ENCODE measurements at regions of chr16 and their contacts with region 1.

Region 1: GRCh38 chr16:96935-97381 is 18.9 kb downstream of the MPG start:
- DNase-seq: peak; percentile 90
- H3K4me3 Mint-ChIP-seq: no peak overlapping the region
- H3K27ac Mint-ChIP-seq: no peak overlapping the region
- H3K4me1 Mint-ChIP-seq: peaks cover 10% of the 10 kb centered on the region
- H3K27me3 Mint-ChIP-seq: no peaks in the 10 kb centered on the region
- CTCF ChIP-seq: peak; percentile 95

Region 2: GRCh38 chr16:53346-54236 is 43.4 kb before region 1 on chr16 and contains the starts of genes POLR3K and SNRNP25:
- CTCF ChIA-PET with region 1: interaction called, 5 read pairs
- POLR2A ChIA-PET with region 1: no interaction called
- intact Hi-C with region 1: loop called (anchors 1 kb)
- DNase-seq: peak; percentile 97
- H3K4me3 Mint-ChIP-seq: peak within 1 kb of the TSS; percentile 98
- H3K27ac Mint-ChIP-seq: peak within 1 kb of the TSS; percentile 92
- H3K4me1 Mint-ChIP-seq: peaks cover 5% of the 10 kb centered on the region
- H3K27me3 Mint-ChIP-seq: no peaks in the 10 kb centered on the region
- CTCF ChIP-seq: no peak
- total RNA-seq, gene POLR3K: 14.8 and 19.2 TPM in 2 replicates
- total RNA-seq, gene SNRNP25: 11.9 and 21.2 TPM in 2 replicates

Region 3: GRCh38 chr16:65671-66137 is 31.3 kb before region 1 on chr16:
- CTCF ChIA-PET with region 1: interaction called, 89 read pairs
- POLR2A ChIA-PET with region 1: interaction called, 6 read pairs
- intact Hi-C with region 1: loop called (anchors 1 kb)
- DNase-seq: peak; percentile 76
- H3K4me3 Mint-ChIP-seq: no peak overlapping the region
- H3K27ac Mint-ChIP-seq: no peak overlapping the region
- H3K4me1 Mint-ChIP-seq: no peaks in the 10 kb centered on the region
- H3K27me3 Mint-ChIP-seq: no peaks in the 10 kb centered on the region
- CTCF ChIP-seq: peak; percentile 98

Region 4: GRCh38 chr16:72561-73548 is 24.1 kb before region 1 on chr16 and contains the start of gene RHBDF1:
- CTCF ChIA-PET with region 1: interaction called, 56 read pairs
- POLR2A ChIA-PET with region 1: interaction called, 11 read pairs
- intact Hi-C with region 1: no loop called
- DNase-seq: peak; percentile 42
- H3K4me3 Mint-ChIP-seq: peak within 1 kb of the TSS; percentile 71
- H3K27ac Mint-ChIP-seq: peak within 1 kb of the TSS; percentile 62
- H3K4me1 Mint-ChIP-seq: peaks cover 24% of the 10 kb centered on the region
- H3K27me3 Mint-ChIP-seq: no peaks in the 10 kb centered on the region
- CTCF ChIP-seq: no peak
- total RNA-seq, gene RHBDF1: 26.3 and 30.0 TPM in 2 replicates

Region 5: DNA sequence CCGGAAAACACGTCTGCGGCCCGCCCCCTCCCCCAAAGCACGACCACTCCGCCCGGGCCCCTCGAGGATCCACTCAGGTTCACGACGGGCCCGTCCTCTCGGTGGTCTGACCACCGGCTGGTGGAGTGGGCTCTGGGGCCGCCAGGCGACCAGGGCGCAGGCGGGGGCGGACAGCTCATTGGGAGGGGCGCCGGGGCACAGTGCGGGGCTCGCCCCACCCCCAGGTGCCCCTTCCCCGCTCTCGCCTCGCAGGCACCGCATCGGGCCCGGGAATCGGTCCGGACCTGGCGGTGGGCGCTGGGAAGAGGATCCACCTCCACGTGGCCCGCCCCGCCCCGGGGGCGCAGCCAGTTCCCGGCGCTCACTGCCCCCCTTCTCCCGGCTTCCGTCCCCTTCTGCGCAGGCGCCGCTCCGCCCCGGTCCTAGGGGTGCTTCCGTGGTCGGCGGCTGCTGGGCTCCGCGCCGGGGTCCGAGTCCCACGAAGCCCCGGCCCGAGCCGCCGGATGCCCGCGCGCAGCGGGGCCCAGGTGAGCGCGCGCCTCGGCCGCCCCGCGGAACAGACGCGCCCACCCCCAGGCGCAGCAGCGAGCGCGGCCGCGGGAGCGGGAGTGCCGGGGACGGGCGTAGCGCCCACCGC is 19.0 kb before region 1 on chr16 and contains the start of gene MPG:
- CTCF ChIA-PET with region 1: interaction called, 56 read pairs
- POLR2A ChIA-PET with region 1: interaction called, 11 read pairs
- intact Hi-C with region 1: no loop called
- DNase-seq: peak; percentile 80
- H3K4me3 Mint-ChIP-seq: peak within 1 kb of the TSS; percentile 82
- H3K27ac Mint-ChIP-seq: peak within 1 kb of the TSS; percentile 85
- H3K4me1 Mint-ChIP-seq: peaks cover 22% of the 10 kb centered on the region
- H3K27me3 Mint-ChIP-seq: no peaks in the 10 kb centered on the region
- CTCF ChIP-seq: no peak
- total RNA-seq, gene MPG: 62.8 and 66.1 TPM in 2 replicates

Region 6: DNA sequence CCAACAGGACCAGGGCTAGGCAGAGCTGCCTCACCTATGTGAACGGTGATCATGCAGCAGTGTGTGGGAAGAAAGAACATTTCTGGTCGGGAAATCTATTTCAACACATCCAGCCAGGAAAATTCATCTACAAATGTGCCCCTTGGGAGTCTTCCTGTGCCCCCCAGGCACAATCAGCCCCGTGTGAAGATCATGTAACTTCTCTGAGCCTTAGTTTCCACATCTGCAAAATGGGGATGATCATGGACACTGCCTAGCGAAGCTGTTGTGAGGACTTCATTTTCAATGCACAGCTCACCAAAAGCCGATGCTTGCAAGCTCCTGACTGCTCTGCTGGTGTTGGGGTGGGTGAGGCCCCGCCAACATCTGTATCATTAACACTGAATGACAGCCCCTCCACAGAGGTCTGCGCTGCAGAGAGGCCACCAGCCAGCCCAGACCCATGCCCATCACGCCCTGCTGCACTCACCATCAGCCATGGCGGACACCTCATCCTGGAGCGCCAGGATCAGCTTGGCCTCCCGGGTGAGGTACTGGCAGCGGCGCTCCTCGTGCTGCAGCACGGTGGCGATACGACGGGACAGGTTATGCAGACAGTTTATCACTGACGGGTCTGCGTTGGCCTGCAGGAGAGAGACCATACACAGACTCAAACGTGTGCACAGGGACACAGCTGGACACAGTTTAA is 15.3 kb after region 1 on chr16:
- CTCF ChIA-PET with region 1: interaction called, 65 read pairs
- POLR2A ChIA-PET with region 1: interaction called, 6 read pairs
- intact Hi-C with region 1: no loop called
- DNase-seq: no peak
- H3K4me3 Mint-ChIP-seq: no peak overlapping the region
- H3K27ac Mint-ChIP-seq: no peak overlapping the region
- H3K4me1 Mint-ChIP-seq: peaks cover 13% of the 10 kb centered on the region
- H3K27me3 Mint-ChIP-seq: no peaks in the 10 kb centered on the region
- CTCF ChIP-seq: no peak

Region 7: DNA sequence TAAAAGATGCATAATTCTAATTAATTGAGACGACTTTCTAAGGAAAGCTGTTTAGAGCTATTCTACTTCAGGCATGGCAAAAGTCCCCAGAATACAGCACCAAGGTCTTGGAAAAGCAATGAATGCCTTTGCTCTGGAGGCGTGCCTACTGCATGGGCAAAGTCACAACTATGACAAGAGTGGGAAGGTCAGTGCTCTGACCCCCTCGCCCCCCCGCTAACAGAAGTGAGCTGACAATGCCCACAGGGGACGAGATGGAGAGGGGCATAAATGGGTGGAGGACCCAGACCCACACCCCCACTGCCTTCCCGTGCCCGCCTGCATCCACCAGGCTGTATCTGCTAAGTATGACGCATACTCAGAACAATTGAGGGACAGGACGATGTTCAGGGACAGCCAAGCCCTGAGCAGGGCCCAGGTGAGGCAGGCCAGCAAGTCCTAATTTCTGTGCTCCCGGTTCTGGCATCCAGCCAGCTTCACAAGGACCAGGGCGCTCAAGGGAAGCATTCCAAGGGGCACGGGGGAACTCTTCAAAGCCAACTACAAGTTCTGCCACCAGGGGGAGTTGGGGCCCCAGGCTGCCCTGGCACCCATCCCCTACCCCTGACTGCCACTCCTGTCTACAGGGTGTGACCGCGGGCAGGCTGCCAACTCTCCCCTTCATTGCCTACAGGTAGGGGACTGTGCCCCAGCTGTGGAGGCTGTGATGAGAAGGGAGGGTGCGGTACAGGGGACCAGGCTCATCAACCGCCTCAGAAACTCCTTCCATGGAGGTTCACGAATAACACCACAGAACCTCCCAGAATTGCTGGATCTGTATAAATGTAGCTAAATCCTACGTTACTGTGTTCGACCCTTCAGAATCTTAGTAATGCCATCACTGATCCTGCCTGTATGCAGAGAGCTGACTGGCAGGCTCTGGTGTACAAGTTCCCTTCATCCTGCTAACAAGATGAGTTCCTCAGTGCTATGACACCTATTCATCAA is 20.7 kb after region 1 on chr16:
- CTCF ChIA-PET with region 1: interaction called, 11 read pairs
- POLR2A ChIA-PET with region 1: interaction called, 3 read pairs
- intact Hi-C with region 1: no loop called
- DNase-seq: peak; percentile 69
- H3K4me3 Mint-ChIP-seq: no peak overlapping the region
- H3K27ac Mint-ChIP-seq: no peak overlapping the region
- H3K4me1 Mint-ChIP-seq: peaks cover 13% of the 10 kb centered on the region
- H3K27me3 Mint-ChIP-seq: no peaks in the 10 kb centered on the region
- CTCF ChIP-seq: peak; percentile 69

Region 8: DNA sequence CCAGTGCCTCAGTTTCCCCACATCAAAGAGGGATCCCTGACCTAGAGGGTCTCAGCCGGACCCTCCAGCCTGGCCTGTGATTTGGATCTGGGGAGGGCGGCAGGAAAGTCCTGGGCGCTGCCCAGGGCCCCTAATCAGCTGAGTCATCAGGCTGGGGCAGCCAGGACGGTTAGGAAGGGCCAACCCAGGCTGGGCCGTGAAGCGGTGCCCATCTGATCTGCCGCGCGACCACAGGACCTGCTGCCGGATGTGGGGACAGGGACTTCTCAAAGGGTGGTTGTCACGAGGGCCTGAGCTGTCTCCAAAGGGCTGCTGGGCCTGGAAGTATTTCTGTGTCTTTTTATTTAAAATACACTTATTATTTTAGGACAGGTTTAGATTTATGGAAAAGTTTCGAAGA is 1147.9 kb after region 1 on chr16:
- CTCF ChIA-PET with region 1: no interaction called
- POLR2A ChIA-PET with region 1: no interaction called
- intact Hi-C with region 1: no loop called
- DNase-seq: no peak
- H3K4me3 Mint-ChIP-seq: no peak overlapping the region
- H3K27ac Mint-ChIP-seq: no peak overlapping the region
- H3K4me1 Mint-ChIP-seq: no peaks in the 10 kb centered on the region
- H3K27me3 Mint-ChIP-seq: no peaks in the 10 kb centered on the region
- CTCF ChIP-seq: no peak